Cardiac septum (tissue), 1 donor: ENCODE measurements at regions of chrX and their contacts with region 1.

Region 1: GRCh38 chrX:47373198-47373597 is 2.8 kb downstream of the ZNF157 start:
- DNase-seq: no peak

Region 2: DNA sequence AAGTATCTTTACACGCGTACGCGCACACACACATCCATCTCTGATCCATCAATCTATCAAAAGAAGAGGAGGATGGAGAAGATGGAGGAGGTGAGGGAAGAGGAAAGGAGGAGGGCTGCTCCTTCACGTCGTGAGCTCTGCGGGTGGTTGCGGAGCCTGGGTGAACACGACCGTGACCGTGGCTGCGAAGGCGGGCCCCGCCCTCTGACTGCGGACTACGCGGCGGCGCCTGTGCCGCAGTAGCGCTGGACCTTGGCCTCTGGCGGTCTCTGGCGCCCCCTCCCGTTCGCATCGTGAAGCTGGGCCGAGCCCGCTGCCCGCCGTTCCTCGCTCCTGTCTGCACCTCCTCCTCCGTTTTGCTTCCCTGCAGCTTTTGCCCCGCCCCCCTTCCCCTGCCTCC is 150.1 kb after region 1 on chrX:
- intact Hi-C with region 1: loop called (anchors 10 kb)
- DNase-seq: peak; percentile 93